ENCODE measurements at regions of chr12 and their contacts with region 1.

Region 1: DNA sequence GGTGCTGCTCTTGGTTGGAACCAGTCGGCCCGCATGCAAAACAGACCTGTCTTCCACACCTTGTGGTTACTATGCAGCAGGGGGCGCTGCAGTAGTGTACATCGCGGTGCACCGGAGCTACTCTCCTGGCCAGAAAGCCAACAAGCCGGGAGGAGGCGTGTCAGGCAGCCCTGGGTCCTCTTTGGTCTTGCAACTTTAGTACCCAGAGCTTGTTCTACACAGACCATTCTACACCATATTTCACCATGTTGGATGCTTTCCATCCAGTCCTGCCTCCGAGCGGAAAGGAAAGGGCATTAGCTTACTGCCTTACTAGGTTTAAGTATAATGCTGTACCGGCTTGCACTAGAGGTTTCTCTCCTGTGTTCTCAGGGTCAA is 927 bp upstream of the TMTC2 start:
- DNase-seq: peak; percentile 96
- ATAC-seq: peak; percentile 66
- H3K4me3 Mint-ChIP-seq: peak overlapping the region; percentile 79
- H3K27ac Mint-ChIP-seq: no peak overlapping the region
- H3K4me1 Mint-ChIP-seq: peaks cover 10% of the 10 kb centered on the region
- H3K27me3 Mint-ChIP-seq: peaks cover 14% of the 10 kb centered on the region

Region 2: GRCh38 chr12:82358200-82359114 is 327.3 kb before region 1 on chr12 and contains the starts of genes CCDC59 and METTL25:
- CTCF ChIA-PET with region 1: interaction called, 5 read pairs
- POLR2A ChIA-PET with region 1: no interaction called
- intact Hi-C with region 1: loop called (anchors 1 to 2 kb)
- DNase-seq: peak; percentile 98
- ATAC-seq: peak; percentile 96
- H3K4me3 Mint-ChIP-seq: peak within 1 kb of the TSS; percentile 98
- H3K27ac Mint-ChIP-seq: peak within 1 kb of the TSS; percentile 99
- H3K4me1 Mint-ChIP-seq: peaks cover 44% of the 10 kb centered on the region
- H3K27me3 Mint-ChIP-seq: no peaks in the 10 kb centered on the region
- total RNA-seq, gene CCDC59: 104 to 137 TPM
- total RNA-seq, gene METTL25: 5.0 to 5.3 TPM

Region 3: DNA sequence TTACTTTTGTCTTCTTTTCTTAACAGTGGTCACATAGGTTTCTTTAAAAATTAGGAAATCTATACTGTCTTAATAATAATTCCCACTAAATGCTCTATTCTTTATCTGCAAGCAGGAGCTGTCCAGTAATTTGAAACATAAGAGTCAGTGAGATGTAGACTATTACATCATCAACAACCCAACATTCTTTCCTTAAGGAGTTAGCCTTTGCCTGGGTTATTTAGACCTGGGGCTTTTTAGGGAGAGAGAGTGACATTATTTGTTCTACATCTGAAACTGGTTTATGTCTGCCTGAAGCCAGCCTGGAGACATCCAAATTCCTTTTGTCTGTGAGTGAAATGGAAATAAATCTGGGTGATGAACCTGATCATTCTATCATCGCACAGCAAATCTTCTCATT is 295.4 kb after region 1 on chr12:
- CTCF ChIA-PET with region 1: no interaction called
- POLR2A ChIA-PET with region 1: no interaction called
- intact Hi-C with region 1: loop called in 1 of 2 experiments (anchors 10 kb)
- DNase-seq: no peak
- ATAC-seq: no peak
- H3K4me3 Mint-ChIP-seq: no peak overlapping the region
- H3K27ac Mint-ChIP-seq: no peak overlapping the region
- H3K4me1 Mint-ChIP-seq: no peaks in the 10 kb centered on the region
- H3K27me3 Mint-ChIP-seq: no peaks in the 10 kb centered on the region

Region 4: DNA sequence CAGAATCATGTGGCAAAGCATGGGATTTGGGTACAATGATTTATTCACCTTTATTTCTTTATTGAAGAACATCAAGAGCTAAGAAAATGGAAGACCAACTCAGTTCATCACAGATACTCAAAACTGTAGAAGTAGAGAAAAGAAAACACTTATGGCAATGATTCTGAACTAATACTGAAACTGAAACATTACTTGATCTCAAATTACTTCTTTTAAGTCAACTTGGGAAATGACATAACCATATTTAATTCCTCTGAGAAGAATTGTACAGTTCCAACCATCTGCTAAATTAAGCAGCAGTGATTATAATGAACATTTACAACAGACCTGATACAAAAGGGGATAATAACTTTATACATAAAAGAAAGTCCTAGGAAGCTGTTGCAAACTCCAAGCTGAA is 467.4 kb after region 1 on chr12:
- CTCF ChIA-PET with region 1: interaction called, 3 read pairs
- POLR2A ChIA-PET with region 1: no interaction called
- intact Hi-C with region 1: loop called in 1 of 2 experiments (anchors 10 kb)
- DNase-seq: no peak
- ATAC-seq: peak; percentile 33
- H3K4me3 Mint-ChIP-seq: no peak overlapping the region
- H3K27ac Mint-ChIP-seq: no peak overlapping the region
- H3K4me1 Mint-ChIP-seq: no peaks in the 10 kb centered on the region
- H3K27me3 Mint-ChIP-seq: no peaks in the 10 kb centered on the region

Region 5: DNA sequence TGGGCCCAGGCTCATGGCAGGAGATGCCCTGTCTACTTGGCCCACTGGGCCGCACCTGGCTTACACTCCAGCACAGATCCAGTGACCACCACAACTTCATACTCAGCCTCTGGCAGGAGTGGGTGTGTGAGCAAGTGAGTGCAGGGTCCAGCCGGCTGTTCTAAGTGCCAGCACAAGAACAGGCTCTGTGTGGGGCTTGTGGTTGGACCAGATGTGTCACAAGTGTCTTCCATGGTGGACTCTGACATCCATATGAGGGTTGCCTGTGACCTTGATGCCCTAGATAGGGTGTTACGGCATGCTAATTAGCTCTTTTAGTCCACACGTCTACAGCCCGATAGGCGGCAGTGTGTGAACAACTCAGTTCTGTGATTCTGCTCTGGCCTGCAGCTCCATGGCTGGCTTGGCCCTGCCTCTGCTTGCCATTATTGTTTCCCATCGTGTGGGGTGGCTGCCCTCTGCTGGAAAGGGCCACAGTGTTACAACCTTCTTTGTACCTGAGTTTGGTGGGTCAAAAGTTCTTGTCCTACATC is 1137.7 kb after region 1 on chr12:
- CTCF ChIA-PET with region 1: interaction called, 17 read pairs
- POLR2A ChIA-PET with region 1: no interaction called
- intact Hi-C with region 1: loop called (anchors 1 kb)
- DNase-seq: peak; percentile 66
- ATAC-seq: peak; percentile 84
- H3K4me3 Mint-ChIP-seq: no peak overlapping the region
- H3K27ac Mint-ChIP-seq: no peak overlapping the region
- H3K4me1 Mint-ChIP-seq: no peaks in the 10 kb centered on the region
- H3K27me3 Mint-ChIP-seq: no peaks in the 10 kb centered on the region